HAP-1 (cell line): ENCODE measurements at regions of chr18 and their contacts with region 1.

Region 1: DNA sequence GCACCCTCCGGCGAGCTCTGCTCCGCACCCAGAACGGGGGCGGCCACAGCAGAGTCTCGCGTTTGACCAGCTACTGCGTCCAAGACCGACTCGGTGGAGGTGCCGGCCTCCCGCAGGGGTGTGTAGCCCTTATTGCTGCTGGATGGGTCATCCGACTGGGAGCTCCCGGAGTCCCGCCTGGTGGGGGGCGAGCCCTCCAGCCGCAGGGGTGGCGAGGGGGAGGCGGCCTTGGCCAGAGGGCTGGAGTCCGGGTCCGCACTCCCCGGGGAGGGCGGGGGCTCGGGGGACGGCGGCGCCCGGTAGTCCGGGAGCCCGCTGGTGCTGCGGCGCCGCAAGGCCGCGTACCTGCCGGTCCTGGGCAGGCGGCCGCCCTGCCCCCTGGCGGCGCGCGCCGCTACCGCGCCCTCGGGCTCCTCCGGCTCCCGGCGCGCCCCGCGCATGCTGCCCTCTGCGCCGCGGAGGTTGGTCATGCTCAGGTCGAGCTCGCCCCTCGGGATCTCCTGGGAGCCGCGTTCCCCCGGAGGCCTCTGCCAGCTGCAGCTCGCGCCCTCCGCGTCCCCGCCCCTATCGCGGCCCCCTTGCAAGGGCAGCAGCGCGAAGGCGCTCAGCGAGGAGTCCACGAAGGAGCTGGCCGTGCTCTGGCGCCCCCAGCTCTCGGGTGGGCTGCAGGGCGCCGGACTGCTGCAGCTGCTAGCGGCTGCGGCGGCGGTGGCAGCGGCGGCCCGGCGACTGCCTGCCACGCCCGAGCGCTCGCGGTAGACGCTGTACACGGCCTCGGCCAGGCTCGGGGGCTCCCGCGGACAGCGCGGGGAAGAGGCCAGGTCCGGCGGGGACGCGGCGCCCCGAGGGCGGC is 4.8 kb downstream of the TMEM200C start:
- DNase-seq: peak; percentile 4 to 52
- H3K4me3 ChIP-seq: no peak overlapping the region
- H3K4me1 ChIP-seq: no peaks in the 10 kb centered on the region
- H3K27me3 ChIP-seq: peaks cover 22% of the 10 kb centered on the region

Region 2: DNA sequence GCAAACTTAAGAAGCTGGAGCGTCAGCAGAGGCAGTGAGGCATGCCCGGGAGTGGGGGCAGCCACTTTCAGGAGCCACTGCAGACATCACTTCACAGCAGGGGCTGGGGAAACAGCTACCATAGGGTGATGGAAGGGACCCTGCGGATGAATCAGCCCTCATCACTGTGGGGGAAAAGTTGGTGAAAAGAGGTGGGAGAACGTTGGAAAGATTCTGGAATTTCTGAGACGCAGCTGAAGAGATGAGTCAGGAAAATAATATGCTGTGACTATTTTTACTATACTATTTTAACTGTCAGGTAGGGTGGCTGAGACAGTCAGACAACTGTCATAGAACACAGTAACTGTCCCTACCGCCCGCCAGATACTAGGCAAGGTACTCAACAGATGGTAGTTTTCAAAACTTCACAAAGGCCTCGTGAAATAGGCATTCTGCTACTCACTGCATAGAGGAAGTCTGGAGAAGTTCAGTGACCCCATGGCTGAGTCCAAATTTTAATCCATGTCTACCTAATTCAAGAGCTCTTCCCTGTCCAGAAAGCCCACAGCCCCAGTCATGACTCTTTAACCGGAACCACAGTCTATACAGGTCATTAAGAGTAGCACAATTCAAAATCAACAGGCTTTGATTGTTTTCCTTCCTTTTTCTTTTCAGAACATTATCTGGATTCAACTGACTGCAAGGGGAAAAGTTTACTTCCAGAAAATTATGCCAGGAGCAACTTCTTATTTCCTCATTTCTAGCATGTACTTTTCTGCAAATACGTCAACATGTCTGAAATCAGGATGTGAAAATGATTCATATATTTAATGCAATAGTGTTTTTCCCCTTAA is 307.5 kb before region 1 on chr18:
- in situ Hi-C with region 1: loop called (anchors 25 kb)
- DNase-seq: no peak
- H3K4me3 ChIP-seq: no peak overlapping the region
- H3K4me1 ChIP-seq: peaks cover 13% of the 10 kb centered on the region
- H3K27me3 ChIP-seq: no peaks in the 10 kb centered on the region